Left ventricle myocardium inferior (tissue), 1 donor: ENCODE measurements at regions of chr18 and their contacts with region 1.

Region 1: DNA sequence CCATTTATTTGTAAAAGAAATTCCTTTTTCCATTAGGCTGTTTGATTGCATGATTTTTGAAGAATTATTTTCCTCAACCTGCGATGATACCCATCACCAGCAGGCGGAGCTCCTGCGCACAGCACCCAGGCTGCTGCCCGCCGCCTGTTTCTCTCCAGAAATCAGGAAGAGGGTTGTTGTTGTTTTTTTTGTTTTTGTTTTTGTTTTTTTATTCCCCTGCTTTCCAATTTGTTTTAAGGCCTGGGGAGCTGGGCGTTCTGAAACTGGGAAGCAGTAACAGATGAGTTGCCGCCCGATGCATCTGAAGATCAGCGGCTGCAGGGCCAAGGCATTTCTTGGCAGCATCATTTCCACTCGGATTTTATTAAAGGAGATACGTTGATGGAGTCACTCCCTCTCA is 132.1 kb downstream of the MBP start:
- DNase-seq: peak; percentile 56
- H3K4me3 ChIP-seq: peak overlapping the region; percentile 20
- H3K27ac ChIP-seq: no peak overlapping the region
- H3K4me1 ChIP-seq: no peaks in the 10 kb centered on the region
- H3K27me3 ChIP-seq: no peaks in the 10 kb centered on the region
- CTCF ChIP-seq: peak; percentile 99

Region 2: GRCh38 chr18:76838182-76838581 is 162.3 kb before region 1 on chr18:
- intact Hi-C with region 1: no loop called
- DNase-seq: no peak
- H3K4me3 ChIP-seq: no peak overlapping the region
- H3K27ac ChIP-seq: no peak overlapping the region
- H3K4me1 ChIP-seq: peaks cover 23% of the 10 kb centered on the region
- H3K27me3 ChIP-seq: no peaks in the 10 kb centered on the region
- CTCF ChIP-seq: no peak

Region 3: GRCh38 chr18:76892832-76893231 is 107.7 kb before region 1 on chr18:
- intact Hi-C with region 1: no loop called
- DNase-seq: no peak
- H3K4me3 ChIP-seq: no peak overlapping the region
- H3K27ac ChIP-seq: no peak overlapping the region
- H3K4me1 ChIP-seq: no peaks in the 10 kb centered on the region
- H3K27me3 ChIP-seq: no peaks in the 10 kb centered on the region
- CTCF ChIP-seq: no peak

Region 4: DNA sequence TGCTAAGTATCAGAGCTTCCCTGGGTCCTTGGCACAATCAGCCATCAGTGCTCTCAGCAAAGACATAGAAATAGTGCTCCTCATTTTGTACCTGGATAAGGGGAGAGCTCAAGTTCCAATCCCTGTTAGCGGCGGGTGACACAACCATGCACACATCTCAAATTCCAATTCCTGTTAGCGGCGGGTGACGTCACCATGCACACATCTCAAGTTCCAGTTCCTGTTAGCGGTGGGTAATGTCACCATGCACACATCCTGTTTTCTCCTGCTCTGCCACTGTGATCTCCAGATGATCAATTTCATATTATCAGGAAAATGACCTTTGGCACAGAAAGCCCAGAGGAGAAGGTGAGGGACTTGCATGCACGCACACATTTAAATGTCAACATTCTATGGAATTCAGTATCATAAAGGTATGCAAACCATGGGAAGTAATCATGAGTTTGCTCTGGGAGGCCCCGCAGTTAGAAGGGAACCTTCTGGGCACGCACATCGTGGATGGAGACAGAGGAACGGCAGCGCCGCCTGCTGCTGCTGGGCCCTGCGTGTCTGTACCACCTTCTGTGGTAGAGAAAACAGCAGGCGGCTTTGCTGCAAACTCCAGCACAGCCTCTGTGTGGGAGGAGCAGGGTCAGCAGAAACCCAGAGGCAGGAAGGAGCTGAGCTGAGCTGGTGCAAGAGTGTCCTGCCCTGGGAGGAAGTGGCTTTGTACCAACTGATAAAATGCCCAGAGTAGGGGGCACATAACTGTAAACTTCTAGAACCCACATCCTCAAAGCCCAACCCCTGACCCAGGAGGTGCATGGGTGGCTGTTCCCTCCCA is 54.3 kb after region 1 on chr18:
- intact Hi-C with region 1: loop called (anchors 5 kb)
- DNase-seq: peak; percentile 84
- H3K4me3 ChIP-seq: no peak overlapping the region
- H3K27ac ChIP-seq: peak overlapping the region; percentile 80
- H3K4me1 ChIP-seq: peaks cover 72% of the 10 kb centered on the region
- H3K27me3 ChIP-seq: no peaks in the 10 kb centered on the region
- CTCF ChIP-seq: peak; percentile 75

Region 5: GRCh38 chr18:78672862-78673446 is 1672.4 kb after region 1 on chr18:
- intact Hi-C with region 1: no loop called
- DNase-seq: no peak
- H3K4me3 ChIP-seq: no peak overlapping the region
- H3K27ac ChIP-seq: no peak overlapping the region
- H3K4me1 ChIP-seq: no peaks in the 10 kb centered on the region
- H3K27me3 ChIP-seq: peaks cover 40% of the 10 kb centered on the region
- CTCF ChIP-seq: no peak